Activated B cell treated with CpG ODN at 0.5 μM for 24 hours (primary cell): ENCODE measurements at regions of chr2 and their contacts with region 1.

Region 1: GRCh38 chr2:112626604-112627059 is 19.1 kb upstream of the SLC20A1 start:
- DNase-seq: peak; percentile 55
- ATAC-seq: peak; percentile 85
- H3K4me3 Mint-ChIP-seq: peak overlapping the region; percentile 44
- H3K27ac Mint-ChIP-seq: no peak overlapping the region
- H3K4me1 Mint-ChIP-seq: peaks cover 30% of the 10 kb centered on the region
- H3K27me3 Mint-ChIP-seq: no peaks in the 10 kb centered on the region
- CTCF ChIP-seq: peak; percentile 25

Region 2: DNA sequence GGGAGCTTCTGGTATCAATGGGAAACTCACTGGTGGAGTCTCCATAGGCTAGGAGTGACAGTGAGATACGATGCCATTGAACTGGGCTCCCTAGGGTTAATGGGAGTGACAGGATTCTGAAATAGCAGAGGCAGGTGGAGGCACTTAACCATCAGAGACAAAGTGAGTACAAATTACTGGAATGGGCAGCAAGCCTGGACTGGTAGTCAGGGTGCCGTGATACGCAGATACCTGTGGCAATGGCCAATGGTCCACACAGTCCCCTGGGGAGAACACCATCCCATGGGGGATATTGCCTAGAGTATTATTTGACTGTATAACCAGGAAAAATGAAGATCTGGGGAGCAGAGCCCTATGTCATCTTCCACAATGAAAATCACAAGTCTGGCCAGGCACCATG is 24.9 kb before region 1 on chr2:
- CTCF ChIA-PET with region 1: interaction called, 19 read pairs
- POLR2A ChIA-PET with region 1: interaction called, 5 read pairs
- intact Hi-C with region 1: loop called (anchors 2 kb)
- DNase-seq: no peak
- ATAC-seq: no peak
- H3K4me3 Mint-ChIP-seq: no peak overlapping the region
- H3K27ac Mint-ChIP-seq: no peak overlapping the region
- H3K4me1 Mint-ChIP-seq: peaks cover 6% of the 10 kb centered on the region
- H3K27me3 Mint-ChIP-seq: no peaks in the 10 kb centered on the region
- CTCF ChIP-seq: no peak

Region 3: DNA sequence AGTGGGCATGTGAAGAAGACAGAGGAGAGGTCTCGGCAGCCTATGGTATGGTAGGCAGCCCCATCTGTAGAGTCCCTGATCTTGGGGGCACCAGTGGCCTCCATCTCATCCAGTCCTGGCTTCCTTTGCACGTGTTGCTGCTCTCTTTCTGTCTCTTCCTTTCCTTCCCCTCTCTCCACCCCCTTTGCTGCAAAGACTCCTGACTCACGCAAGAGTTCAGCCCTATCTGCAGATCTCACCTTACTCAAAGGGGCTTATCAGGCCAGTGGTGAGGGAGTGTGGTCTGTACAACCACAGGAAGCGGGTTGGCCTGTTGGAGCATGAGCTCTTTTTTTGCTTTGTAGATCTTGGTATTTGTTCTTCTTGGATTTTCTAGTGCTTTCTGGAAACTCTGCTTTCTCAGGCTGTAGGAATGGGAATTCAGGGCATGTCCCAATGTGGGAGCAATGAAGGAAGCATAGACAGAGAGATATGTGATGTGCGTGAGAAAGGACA is 79.6 kb after region 1 on chr2:
- CTCF ChIA-PET with region 1: interaction called, 8 read pairs
- POLR2A ChIA-PET with region 1: interaction called, 6 read pairs
- intact Hi-C with region 1: loop called (anchors 1 kb)
- DNase-seq: no peak
- ATAC-seq: peak; percentile 56
- H3K4me3 Mint-ChIP-seq: peak overlapping the region; percentile 58
- H3K27ac Mint-ChIP-seq: peak overlapping the region; percentile 85
- H3K4me1 Mint-ChIP-seq: peaks cover 85% of the 10 kb centered on the region
- H3K27me3 Mint-ChIP-seq: no peaks in the 10 kb centered on the region
- CTCF ChIP-seq: no peak

Region 4: GRCh38 chr2:112749755-112750559 is 123.3 kb after region 1 on chr2:
- CTCF ChIA-PET with region 1: interaction called, 20 read pairs
- POLR2A ChIA-PET with region 1: no interaction called
- intact Hi-C with region 1: no loop called
- DNase-seq: peak; percentile 71
- ATAC-seq: peak; percentile 92
- H3K4me3 Mint-ChIP-seq: no peak overlapping the region
- H3K27ac Mint-ChIP-seq: peak overlapping the region; percentile 16
- H3K4me1 Mint-ChIP-seq: peaks cover 12% of the 10 kb centered on the region
- H3K27me3 Mint-ChIP-seq: no peaks in the 10 kb centered on the region
- CTCF ChIP-seq: no peak

Region 5: DNA sequence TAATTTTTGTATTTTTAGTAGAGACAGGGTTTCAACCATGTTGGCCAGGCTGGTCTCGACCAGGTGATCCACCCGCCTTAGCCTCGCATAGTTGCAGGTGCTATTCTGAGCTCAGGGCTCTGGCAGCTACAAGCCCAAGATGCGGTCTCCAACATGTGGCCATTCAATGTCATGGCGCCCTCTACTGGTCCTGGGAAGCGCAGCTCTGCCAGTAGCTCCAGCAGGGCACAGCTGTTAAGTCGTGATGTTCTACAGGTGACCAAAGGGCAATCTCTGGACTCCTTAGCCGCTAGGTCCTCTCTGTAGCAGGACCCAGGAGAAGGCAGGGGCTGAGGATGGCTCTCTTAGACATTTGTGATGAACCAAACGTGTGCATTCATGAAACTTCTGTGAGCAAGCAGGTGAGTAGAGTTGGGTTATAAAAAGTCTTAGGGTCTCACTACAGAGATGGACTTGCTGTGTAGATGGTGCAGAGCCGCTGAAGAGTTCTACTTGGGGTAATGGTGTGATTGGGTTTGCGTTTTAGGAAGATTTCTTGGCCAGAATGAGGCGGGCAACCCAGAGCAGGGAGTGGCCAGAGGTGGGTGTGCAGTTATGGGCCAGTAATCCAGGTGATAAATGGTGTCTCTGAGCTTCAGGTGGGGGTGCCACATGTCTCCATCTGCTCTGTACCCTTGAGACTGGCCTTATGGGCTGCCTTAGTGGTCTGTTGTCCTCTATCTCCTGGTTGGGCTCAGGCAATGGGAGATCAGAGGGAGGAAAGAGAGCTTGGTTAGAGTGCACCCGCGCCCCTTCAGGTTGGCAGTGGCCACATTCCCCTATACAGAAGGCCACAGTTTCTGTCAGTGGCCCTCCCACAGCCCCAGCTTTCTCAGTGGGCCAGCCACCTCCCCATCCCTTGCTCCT is 315.4 kb after region 1 on chr2:
- CTCF ChIA-PET with region 1: interaction called, 3 read pairs
- POLR2A ChIA-PET with region 1: no interaction called
- intact Hi-C with region 1: loop called (anchors 1 kb)
- DNase-seq: peak; percentile 29
- ATAC-seq: peak; percentile 71
- H3K4me3 Mint-ChIP-seq: no peak overlapping the region
- H3K27ac Mint-ChIP-seq: no peak overlapping the region
- H3K4me1 Mint-ChIP-seq: no peaks in the 10 kb centered on the region
- H3K27me3 Mint-ChIP-seq: peaks cover 7% of the 10 kb centered on the region
- CTCF ChIP-seq: no peak